Common myeloid progenitor, CD34-positive (primary cell): ENCODE measurements at regions of chr12 and their contacts with region 1.

Region 1: DNA sequence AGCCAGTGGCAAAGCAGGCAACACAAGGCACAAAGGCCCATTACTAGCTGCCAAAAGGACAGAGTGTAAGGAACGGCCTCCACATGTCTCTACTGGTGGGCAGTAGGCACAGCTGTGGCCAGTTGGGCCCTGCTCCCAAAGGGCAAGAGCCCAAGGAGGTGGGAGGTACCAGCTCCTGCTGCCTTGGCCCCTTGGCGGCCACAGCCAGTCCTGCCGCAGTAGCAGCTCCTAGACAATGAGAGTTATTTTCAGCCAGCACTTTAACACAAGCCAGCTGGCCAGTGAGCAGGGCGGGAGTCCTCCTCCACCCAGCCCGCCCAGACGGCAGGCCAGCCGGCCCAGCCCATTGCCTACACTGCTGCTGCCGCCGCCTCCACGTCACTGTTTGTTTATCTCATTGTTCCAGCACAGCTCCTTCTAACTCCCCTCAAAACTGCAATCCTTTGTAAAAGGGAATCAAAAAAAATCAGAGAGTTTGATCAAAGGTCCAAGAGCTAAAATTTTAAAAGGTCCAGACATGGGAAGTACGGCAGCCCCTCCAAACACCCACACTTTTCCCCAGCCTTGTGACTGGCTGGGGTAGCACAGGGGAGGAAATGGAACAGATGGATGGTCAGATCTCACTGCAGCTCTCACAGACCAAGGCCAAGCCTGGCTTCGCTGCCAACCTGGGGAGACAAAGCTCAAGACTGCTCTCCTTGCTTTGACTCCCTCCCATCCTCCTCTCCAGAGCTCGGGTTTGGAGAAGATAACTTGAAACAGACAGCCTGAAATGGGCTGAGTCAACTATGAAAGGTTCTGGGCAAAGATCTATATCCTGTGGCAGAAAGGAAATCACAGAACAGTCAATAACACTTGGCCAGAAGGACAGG is 33.5 kb downstream of the FMNL3 start:
- DNase-seq: peak in 2 of 3 donors; percentile 24 to 54
- H3K4me3 ChIP-seq: no peak overlapping the region
- H3K27ac ChIP-seq: peak overlapping the region in 1 of 2 experiments; percentile 51
- H3K4me1 ChIP-seq: peaks cover 15 to 59% (median 50%) of the 10 kb centered on the region in 4 experiments
- H3K27me3 ChIP-seq: no peaks in the 10 kb centered on the region

Region 2: DNA sequence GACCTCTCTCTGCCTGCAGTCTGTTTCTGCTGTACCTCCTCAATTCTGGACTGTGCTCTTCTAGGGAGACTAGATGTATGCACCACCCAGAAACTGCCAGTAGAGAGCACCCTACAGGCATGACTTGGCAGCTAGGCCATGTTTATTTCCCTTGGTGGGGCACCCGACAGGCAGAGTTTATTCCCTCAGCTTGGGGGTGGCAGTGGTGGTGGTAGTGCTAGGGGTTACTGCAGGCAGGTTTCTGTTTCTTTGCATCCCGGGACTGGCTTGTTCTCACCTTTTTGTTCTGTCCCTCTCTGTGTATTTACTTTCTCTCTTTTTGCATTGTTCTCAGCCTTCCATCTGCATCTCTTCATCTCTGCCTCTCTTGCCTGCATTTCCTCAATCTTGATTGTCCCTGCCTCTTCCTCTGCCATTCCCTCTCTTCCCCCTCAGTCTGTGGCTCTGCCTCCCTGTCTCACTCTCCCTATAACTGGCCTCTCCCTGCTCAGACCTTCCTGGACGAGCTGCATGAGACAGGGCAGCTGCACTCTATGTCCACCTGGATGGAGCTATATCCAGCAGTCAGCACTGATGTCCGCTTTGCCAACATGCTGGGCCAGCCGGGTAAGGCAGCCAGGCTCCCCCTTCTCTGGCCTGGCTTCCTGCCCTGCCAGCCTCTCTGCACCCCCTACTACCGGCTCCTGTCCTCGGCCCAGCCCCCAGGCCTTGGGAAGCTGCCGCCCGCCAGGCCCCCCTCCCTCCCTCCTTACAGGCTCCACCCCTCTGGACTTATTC is 36.5 kb before region 1 on chr12:
- CTCF ChIA-PET with region 1: interaction called, 151 read pairs
- POLR2A ChIA-PET with region 1: interaction called, 3 read pairs
- DNase-seq: peak; percentile 69 to 85 (median 84)
- H3K4me3 ChIP-seq: peak overlapping the region in 3 of 7 experiments; percentile 1 to 61 (median 38)
- H3K27ac ChIP-seq: no peak overlapping the region
- H3K4me1 ChIP-seq: peaks cover 3 to 13% (median 7%) of the 10 kb centered on the region in 4 experiments
- H3K27me3 ChIP-seq: no peaks in the 10 kb centered on the region

Region 3: DNA sequence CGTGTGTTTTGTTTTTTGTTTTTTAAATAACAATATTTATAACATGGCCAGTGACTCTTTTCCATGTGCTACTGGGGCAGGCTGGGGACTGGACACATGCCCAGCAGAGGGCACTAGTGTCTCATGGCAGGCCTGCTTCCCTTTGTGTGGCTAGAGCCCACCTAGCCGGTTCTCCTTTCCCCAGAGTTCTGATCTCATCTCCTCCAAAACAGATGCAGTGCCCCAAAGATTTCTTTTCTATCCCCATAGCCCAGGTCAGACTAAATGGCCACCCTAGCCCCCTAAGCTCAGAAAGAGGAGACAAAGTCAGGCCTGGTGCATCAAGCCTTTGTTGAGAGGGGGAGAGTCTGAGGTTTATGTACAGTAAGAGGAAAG is 29.1 kb before region 1 on chr12:
- CTCF ChIA-PET with region 1: interaction called, 151 read pairs
- POLR2A ChIA-PET with region 1: interaction called, 4 read pairs
- DNase-seq: peak; percentile 79 to 91 (median 87)
- H3K4me3 ChIP-seq: peak overlapping the region in 1 of 7 experiments; percentile 19
- H3K27ac ChIP-seq: no peak overlapping the region
- H3K4me1 ChIP-seq: peaks cover 0 to 23% (median 15%) of the 10 kb centered on the region in 4 experiments
- H3K27me3 ChIP-seq: no peaks in the 10 kb centered on the region

Region 4: DNA sequence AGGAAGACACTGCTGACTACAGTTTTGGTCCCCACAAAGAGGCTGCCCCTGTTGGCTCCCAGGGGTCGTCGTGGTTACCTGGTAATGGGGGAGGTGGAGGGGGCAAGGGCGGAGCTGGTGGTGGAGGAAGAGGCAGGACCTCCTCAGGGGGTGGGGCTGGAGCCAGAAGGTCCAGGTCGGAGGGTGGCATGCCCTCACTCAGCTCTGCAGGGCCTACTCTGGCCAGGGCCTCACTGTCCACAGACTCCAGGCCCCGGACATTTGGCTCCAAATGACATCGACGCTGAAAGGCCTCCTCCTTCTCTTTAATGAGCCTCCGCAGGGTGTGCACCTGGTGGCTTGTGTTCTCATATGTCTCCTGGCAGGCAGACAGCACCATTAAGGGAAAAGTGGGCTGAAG is 21.8 kb before region 1 on chr12:
- CTCF ChIA-PET with region 1: interaction called, 151 read pairs
- POLR2A ChIA-PET with region 1: interaction called, 4 read pairs
- DNase-seq: no peak
- H3K4me3 ChIP-seq: no peak overlapping the region
- H3K27ac ChIP-seq: no peak overlapping the region
- H3K4me1 ChIP-seq: peaks cover 0 to 15% (median 6%) of the 10 kb centered on the region in 4 experiments
- H3K27me3 ChIP-seq: no peaks in the 10 kb centered on the region

Region 5: DNA sequence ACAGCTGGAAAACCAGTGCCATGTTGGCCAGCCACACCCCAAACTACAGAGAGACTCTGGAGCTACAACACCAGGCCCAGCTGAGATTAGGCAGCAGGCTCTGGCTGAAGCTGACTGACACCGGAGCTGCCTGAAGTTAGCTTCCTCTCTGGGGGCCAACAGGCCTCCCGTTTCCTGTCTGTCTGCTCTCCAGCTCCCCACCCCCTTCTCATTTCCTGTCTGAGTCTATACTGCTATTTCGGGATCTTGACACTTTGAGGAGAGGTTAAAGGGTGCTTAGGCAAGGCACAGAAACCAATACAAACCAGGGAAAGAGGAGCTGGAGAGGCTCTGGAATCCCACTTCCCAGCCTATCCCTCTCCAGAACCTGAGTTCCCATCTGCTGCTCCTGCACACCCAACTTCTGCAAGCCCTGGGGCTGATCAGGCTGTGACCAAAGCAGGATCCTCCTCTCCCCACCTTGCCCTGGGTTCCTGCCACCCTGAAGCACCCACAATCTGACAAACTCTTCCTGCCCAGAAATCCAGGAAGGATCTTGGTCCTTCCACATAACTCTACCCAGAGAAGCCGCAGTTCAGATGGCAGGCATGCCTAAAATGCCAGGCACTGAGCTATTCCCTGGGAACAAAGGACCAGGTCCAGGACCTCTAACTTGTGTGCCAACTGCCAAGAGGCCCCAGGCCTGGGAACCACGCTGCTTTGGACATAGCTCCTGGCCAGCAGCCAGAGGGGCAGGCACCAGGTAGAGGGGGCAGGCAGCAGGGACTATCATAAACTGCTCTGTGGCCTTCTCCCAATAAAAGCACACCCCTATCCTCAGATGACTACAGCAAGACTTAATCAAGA is 10.5 kb before region 1 on chr12:
- CTCF ChIA-PET with region 1: interaction called, 50 read pairs
- POLR2A ChIA-PET with region 1: interaction called, 41 read pairs
- DNase-seq: peak; percentile 68 to 90 (median 86)
- H3K4me3 ChIP-seq: peak overlapping the region in 4 of 7 experiments; percentile 42 to 61 (median 50)
- H3K27ac ChIP-seq: peak overlapping the region; percentile 25 to 75
- H3K4me1 ChIP-seq: peaks cover 23 to 57% (median 51%) of the 10 kb centered on the region in 4 experiments
- H3K27me3 ChIP-seq: no peaks in the 10 kb centered on the region

Region 6: GRCh38 chr12:49687941-49688340 is 14.3 kb after region 1 on chr12:
- CTCF ChIA-PET with region 1: interaction called, 69 read pairs
- POLR2A ChIA-PET with region 1: interaction called, 3 read pairs
- DNase-seq: no peak
- H3K4me3 ChIP-seq: no peak overlapping the region
- H3K27ac ChIP-seq: no peak overlapping the region
- H3K4me1 ChIP-seq: peaks cover 0 to 9% (median 4%) of the 10 kb centered on the region in 4 experiments
- H3K27me3 ChIP-seq: peaks cover 0 to 1% (median 0%) of the 10 kb centered on the region in 5 experiments

Region 7: DNA sequence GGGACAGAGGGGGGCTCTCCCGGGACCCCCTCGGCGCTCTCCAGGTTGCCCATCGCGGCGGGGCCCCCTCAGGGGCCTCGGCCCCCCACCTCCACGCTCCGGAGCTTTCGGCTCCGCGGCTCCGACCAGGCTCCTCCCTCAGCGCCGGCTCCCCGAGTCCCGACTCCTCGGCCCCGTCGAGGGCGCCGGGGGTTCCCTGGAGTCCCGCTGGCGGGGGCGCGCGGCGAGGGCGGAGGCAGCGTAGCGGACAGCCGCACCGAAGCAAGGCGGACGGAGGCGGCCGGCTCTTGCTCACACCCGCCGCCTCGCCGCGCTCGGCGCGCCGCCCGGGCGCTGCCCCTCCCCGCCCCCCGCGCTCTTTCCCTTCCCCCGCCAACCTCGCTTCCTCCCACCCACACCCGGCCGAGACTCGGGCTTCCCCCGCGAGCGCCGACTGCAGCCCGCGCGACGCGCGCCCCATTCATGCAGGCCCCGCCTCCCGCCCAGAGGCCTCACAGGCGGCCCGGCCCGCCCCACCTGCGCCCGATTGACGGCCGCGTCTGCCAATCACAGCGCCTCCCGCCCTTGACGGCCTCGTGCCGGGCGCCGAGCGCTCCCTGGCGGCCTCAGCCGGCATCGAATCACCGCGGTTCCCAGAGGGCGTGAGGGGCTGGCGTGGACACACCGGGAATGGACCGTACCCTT is 33.6 kb after region 1 on chr12 and contains the start of gene FMNL3:
- CTCF ChIA-PET with region 1: interaction called, 929 read pairs
- POLR2A ChIA-PET with region 1: interaction called, 12 read pairs
- DNase-seq: peak; percentile 95 to 98 (median 98)
- H3K4me3 ChIP-seq: peak within 1 kb of the TSS; percentile 60 to 86 (median 78)
- H3K27ac ChIP-seq: peak within 1 kb of the TSS in 1 of 2 experiments; percentile 63
- H3K4me1 ChIP-seq: peaks cover 9 to 44% (median 35%) of the 10 kb centered on the region in 4 experiments
- H3K27me3 ChIP-seq: peaks cover 0 to 2% (median 0%) of the 10 kb centered on the region in 5 experiments

Region 8: GRCh38 chr12:49763006-49763591 is 89.4 kb after region 1 on chr12:
- CTCF ChIA-PET with region 1: no interaction called
- POLR2A ChIA-PET with region 1: no interaction called
- DNase-seq: peak; percentile 77 to 89 (median 85)
- H3K4me3 ChIP-seq: peak overlapping the region in 2 of 7 experiments; percentile 19 to 31
- H3K27ac ChIP-seq: peak overlapping the region in 1 of 2 experiments; percentile 36
- H3K4me1 ChIP-seq: peaks cover 23 to 36% (median 30%) of the 10 kb centered on the region in 4 experiments
- H3K27me3 ChIP-seq: no peaks in the 10 kb centered on the region

Region 9: DNA sequence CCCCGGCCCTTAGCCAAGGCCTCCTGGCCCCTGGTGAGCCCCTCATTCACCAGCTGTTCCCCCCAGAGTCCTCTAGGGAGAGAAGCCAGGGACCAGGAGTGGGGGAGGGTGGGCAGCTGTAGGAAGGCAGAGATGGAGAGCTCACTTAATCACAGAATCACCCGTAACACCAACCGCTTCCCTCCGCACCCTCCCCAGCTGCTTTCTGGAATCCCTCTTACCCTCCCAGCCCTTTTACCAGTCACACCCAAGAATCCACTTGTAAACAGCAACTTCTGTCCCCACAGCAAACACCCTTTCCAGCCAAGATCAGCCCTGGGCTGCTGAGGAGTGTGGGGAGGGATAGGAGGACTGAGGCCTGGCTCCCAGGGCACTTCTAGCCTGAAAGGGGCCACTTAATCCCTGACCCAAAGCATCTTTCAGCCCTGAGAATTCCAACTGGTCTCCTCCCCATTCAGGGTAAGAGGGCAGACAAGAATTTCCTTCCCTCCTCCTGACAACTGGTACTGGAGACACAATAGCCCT is 135.8 kb after region 1 on chr12:
- CTCF ChIA-PET with region 1: no interaction called
- POLR2A ChIA-PET with region 1: no interaction called
- DNase-seq: no peak
- H3K4me3 ChIP-seq: no peak overlapping the region
- H3K27ac ChIP-seq: no peak overlapping the region
- H3K4me1 ChIP-seq: peaks cover 0 to 20% (median 0%) of the 10 kb centered on the region in 4 experiments
- H3K27me3 ChIP-seq: no peaks in the 10 kb centered on the region